CD4-positive, alpha-beta memory T cell (primary cell): ENCODE measurements at regions of chrX and their contacts with region 1.

Region 1: GRCh38 chrX:1453951-1454785 is 1.5 kb upstream of the ASMTL start:
- DNase-seq: peak; percentile 86 to 90 (median 88)
- H3K4me3 ChIP-seq: peak overlapping the region in 1 of 2 donors; percentile 54
- H3K4me3 Mint-ChIP-seq: peak overlapping the region; percentile 63 to 80 (median 75)
- H3K27ac ChIP-seq: peak overlapping the region; percentile 81
- H3K27ac Mint-ChIP-seq: peak overlapping the region; percentile 78 to 93 (median 88)
- H3K4me1 ChIP-seq: peaks cover 43% of the 10 kb centered on the region
- H3K4me1 Mint-ChIP-seq: peaks cover 14 to 31% (median 21%) of the 10 kb centered on the region in 4 donors
- H3K27me3 ChIP-seq: no peaks in the 10 kb centered on the region
- H3K27me3 Mint-ChIP-seq: no peaks in the 10 kb centered on the region

Region 2: GRCh38 chrX:1246816-1247215 is 207.4 kb before region 1 on chrX:
- CTCF ChIA-PET with region 1: no interaction called
- POLR2A ChIA-PET with region 1: no interaction called
- intact Hi-C with region 1: loop called (anchors 2 kb)
- DNase-seq: peak; percentile 67 to 78 (median 72)
- H3K4me3 ChIP-seq: no peak overlapping the region
- H3K4me3 Mint-ChIP-seq: peak overlapping the region in 3 of 8 donors; percentile 30 to 80 (median 44)
- H3K27ac ChIP-seq: no peak overlapping the region
- H3K27ac Mint-ChIP-seq: peak overlapping the region in 6 of 7 donors; percentile 37 to 90 (median 75)
- H3K4me1 ChIP-seq: peaks cover 26% of the 10 kb centered on the region
- H3K4me1 Mint-ChIP-seq: peaks cover 16 to 32% (median 23%) of the 10 kb centered on the region in 4 donors
- H3K27me3 ChIP-seq: no peaks in the 10 kb centered on the region
- H3K27me3 Mint-ChIP-seq: no peaks in the 10 kb centered on the region

Region 3: GRCh38 chrX:1481636-1482529 is 27.7 kb after region 1 on chrX:
- CTCF ChIA-PET with region 1: no interaction called
- POLR2A ChIA-PET with region 1: no interaction called
- intact Hi-C with region 1: loop called (anchors 1 kb)
- DNase-seq: peak; percentile 80 to 88 (median 82)
- H3K4me3 ChIP-seq: peak overlapping the region in 1 of 2 donors; percentile 27
- H3K4me3 Mint-ChIP-seq: peak overlapping the region; percentile 66 to 93 (median 82)
- H3K27ac ChIP-seq: peak overlapping the region; percentile 63
- H3K27ac Mint-ChIP-seq: peak overlapping the region; percentile 90 to 99 (median 95)
- H3K4me1 ChIP-seq: peaks cover 71% of the 10 kb centered on the region
- H3K4me1 Mint-ChIP-seq: peaks cover 46 to 78% (median 56%) of the 10 kb centered on the region in 4 donors
- H3K27me3 ChIP-seq: no peaks in the 10 kb centered on the region
- H3K27me3 Mint-ChIP-seq: no peaks in the 10 kb centered on the region

Region 4: GRCh38 chrX:1580735-1581531 is 126.8 kb after region 1 on chrX:
- CTCF ChIA-PET with region 1: no interaction called
- POLR2A ChIA-PET with region 1: no interaction called
- intact Hi-C with region 1: loop called (anchors 1 kb)
- DNase-seq: peak; percentile 70 to 78 (median 75)
- H3K4me3 ChIP-seq: no peak overlapping the region
- H3K4me3 Mint-ChIP-seq: peak overlapping the region in 6 of 8 donors; percentile 25 to 71 (median 58)
- H3K27ac ChIP-seq: no peak overlapping the region
- H3K27ac Mint-ChIP-seq: peak overlapping the region; percentile 17 to 87 (median 70)
- H3K4me1 ChIP-seq: peaks cover 60% of the 10 kb centered on the region
- H3K4me1 Mint-ChIP-seq: peaks cover 11 to 22% (median 16%) of the 10 kb centered on the region in 4 donors
- H3K27me3 ChIP-seq: no peaks in the 10 kb centered on the region
- H3K27me3 Mint-ChIP-seq: no peaks in the 10 kb centered on the region

Region 5: DNA sequence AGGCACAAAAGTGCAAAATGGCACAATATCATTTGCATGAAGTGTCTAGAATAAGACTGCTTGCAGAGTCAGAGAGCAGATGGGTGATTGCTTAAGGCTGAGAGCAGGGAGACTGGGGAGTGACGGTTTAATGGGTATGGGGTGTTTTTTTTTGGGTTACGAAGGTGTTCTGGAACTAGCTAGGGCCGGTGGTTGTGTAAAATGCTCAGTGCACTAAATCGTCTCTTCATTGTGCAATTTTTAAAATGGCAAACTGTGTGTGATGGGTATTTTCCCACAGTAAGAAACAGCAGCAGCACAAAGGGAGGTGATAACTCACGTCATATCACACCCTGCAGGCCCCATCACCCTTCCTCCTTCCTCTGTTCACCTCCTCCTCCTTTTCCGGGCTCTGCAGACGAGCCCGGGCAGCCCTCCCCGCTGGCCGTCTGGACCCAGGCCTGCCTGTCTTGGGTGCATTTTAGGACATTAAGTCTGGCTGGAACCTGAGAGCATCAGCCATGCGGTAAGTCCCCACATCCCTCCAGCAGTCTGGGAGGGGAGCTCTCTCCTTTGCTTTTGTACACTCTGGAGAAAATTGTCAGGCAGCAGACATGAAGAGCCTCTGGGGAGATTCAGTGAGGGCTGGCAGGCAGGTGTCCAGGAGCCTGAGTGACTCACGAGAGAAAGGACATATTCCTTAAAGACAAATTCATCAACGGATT is 203.4 kb after region 1 on chrX:
- CTCF ChIA-PET with region 1: no interaction called
- POLR2A ChIA-PET with region 1: no interaction called
- intact Hi-C with region 1: loop called (anchors 1 kb)
- DNase-seq: peak; percentile 46 to 86 (median 64)
- H3K4me3 ChIP-seq: peak overlapping the region; percentile 77 to 89
- H3K4me3 Mint-ChIP-seq: peak overlapping the region; percentile 93 to 98 (median 94)
- H3K27ac ChIP-seq: peak overlapping the region; percentile 82
- H3K27ac Mint-ChIP-seq: peak overlapping the region; percentile 86 to 99 (median 96)
- H3K4me1 ChIP-seq: peaks cover 42% of the 10 kb centered on the region
- H3K4me1 Mint-ChIP-seq: peaks cover 26 to 48% (median 35%) of the 10 kb centered on the region in 4 donors
- H3K27me3 ChIP-seq: no peaks in the 10 kb centered on the region
- H3K27me3 Mint-ChIP-seq: no peaks in the 10 kb centered on the region

Region 6: DNA sequence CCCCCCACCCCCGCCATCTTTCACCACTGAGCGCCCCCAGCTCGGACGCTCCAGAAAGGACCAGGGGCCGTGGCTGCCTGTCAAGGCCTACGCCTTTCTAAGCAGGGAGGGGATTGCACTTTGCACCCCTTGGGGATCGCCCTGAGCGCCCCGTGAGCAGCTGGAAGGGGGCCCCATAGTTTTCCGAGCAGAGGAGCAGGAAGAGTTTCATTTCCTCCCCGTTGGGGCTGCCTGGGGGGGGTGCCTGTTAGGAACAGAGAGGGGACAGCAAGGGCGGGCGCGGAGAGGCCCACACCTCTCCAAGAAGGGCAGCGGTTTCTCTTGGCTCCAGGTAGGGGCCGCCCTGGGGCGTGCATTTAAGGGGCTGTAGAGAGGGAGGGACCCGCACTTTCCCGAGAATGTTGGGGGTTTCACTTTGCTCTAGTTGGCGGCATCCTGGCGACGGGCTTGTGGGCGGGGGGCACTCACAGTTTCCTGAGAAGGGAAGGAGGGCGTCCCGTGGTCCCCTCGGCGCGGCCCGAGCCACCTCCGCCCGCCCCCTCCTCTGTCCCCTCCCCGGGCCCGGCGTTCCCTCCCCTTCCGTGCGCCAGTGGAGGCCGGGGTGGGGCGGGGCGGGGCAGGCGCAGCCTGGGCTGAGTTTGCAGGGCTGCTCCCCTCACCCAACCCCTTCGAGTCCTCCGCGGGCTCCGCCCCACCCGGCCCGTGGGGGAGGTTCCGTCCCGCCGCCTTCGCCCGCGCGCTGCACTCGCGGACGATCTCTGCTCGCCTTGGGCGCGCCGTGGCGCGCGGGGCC is 1154.7 kb after region 1 on chrX:
- CTCF ChIA-PET with region 1: no interaction called
- POLR2A ChIA-PET with region 1: no interaction called
- intact Hi-C with region 1: loop called (anchors 2 kb)
- DNase-seq: peak; percentile 78 to 87 (median 84)
- H3K4me3 ChIP-seq: peak overlapping the region; percentile 30 to 90
- H3K4me3 Mint-ChIP-seq: peak overlapping the region; percentile 91 to 97 (median 93)
- H3K27ac ChIP-seq: peak overlapping the region; percentile 59
- H3K27ac Mint-ChIP-seq: peak overlapping the region; percentile 84 to 94 (median 88)
- H3K4me1 ChIP-seq: peaks cover 35% of the 10 kb centered on the region
- H3K4me1 Mint-ChIP-seq: peaks cover 30 to 74% (median 52%) of the 10 kb centered on the region in 4 donors
- H3K27me3 ChIP-seq: no peaks in the 10 kb centered on the region
- H3K27me3 Mint-ChIP-seq: no peaks in the 10 kb centered on the region

Region 7: GRCh38 chrX:2690856-2691542 is 1236.8 kb after region 1 on chrX and contains the start of gene CD99:
- CTCF ChIA-PET with region 1: no interaction called
- POLR2A ChIA-PET with region 1: no interaction called
- intact Hi-C with region 1: loop called (anchors 1 kb)
- DNase-seq: peak; percentile 87 to 95 (median 88)
- H3K4me3 ChIP-seq: peak within 1 kb of the TSS; percentile 96 to 98
- H3K4me3 Mint-ChIP-seq: peak within 1 kb of the TSS; percentile 92 to 99 (median 96)
- H3K27ac ChIP-seq: peak within 1 kb of the TSS; percentile 72
- H3K27ac Mint-ChIP-seq: peak within 1 kb of the TSS; percentile 86 to 97 (median 93)
- H3K4me1 ChIP-seq: peaks cover 34% of the 10 kb centered on the region
- H3K4me1 Mint-ChIP-seq: peaks cover 23 to 48% (median 33%) of the 10 kb centered on the region in 4 donors
- H3K27me3 ChIP-seq: no peaks in the 10 kb centered on the region
- H3K27me3 Mint-ChIP-seq: no peaks in the 10 kb centered on the region
- total RNA-seq, gene CD99: 283 to 289 TPM